ENCODE measurements at regions of chr17 and their contacts with region 1.

Region 1: DNA sequence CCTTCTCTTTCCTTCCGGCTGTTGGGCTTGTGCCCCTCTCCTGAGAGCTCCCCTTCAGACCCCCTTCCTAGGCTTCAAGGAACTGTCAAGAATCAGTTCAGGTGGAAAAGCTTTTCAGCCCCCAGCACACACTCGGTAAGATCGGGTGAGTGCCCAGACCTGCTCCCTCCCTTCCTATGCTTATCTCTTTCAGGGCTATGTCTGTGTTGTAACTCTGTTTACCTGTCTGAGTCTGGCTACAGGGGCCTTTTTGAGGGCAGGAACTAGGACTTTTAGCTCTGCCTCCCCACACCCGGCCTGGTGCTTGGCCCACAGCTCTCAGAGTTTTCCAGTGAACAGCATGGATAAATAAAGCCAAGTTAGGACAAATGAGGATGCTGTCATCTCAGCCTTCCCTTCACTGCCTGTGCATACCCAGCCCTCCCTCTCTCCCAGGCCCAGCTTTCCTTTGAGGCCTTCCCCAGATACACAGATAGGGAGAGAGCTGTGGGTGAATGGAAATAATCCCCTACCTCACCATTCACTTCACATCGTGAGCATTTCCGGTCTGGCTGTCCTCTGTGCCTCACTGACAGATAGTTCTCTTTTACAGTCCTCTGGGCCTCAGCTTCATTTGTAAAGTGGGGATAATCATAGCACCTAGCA is 5.7 kb upstream of the MRPS23 start:
- DNase-seq: no peak
- H3K4me3 ChIP-seq: no peak overlapping the region
- H3K27ac ChIP-seq: no peak overlapping the region
- H3K4me1 ChIP-seq: peaks cover 13 to 35% of the 10 kb centered on the region in 2 donors
- H3K27me3 ChIP-seq: no peaks in the 10 kb centered on the region
- CTCF ChIP-seq: no peak

Region 2: GRCh38 chr17:57987580-57988421 is 132.3 kb after region 1 on chr17 and contains the start of gene VEZF1:
- intact Hi-C with region 1: loop called (anchors 1 kb)
- DNase-seq: peak in 1 of 2 donors; percentile 85
- H3K4me3 ChIP-seq: peak within 1 kb of the TSS; percentile 84 to 85
- H3K27ac ChIP-seq: peak within 1 kb of the TSS; percentile 97 to 98
- H3K4me1 ChIP-seq: peaks cover 0 to 19% of the 10 kb centered on the region in 2 donors
- H3K27me3 ChIP-seq: no peaks in the 10 kb centered on the region
- CTCF ChIP-seq: no peak
- total RNA-seq, gene VEZF1: 47.4 TPM

Region 3: GRCh38 chr17:57995076-57995956 is 139.8 kb after region 1 on chr17:
- intact Hi-C with region 1: loop called (anchors 1 kb)
- DNase-seq: peak; percentile 23 to 84
- H3K4me3 ChIP-seq: no peak overlapping the region
- H3K27ac ChIP-seq: peak overlapping the region; percentile 32 to 73
- H3K4me1 ChIP-seq: no peaks in the 10 kb centered on the region
- H3K27me3 ChIP-seq: no peaks in the 10 kb centered on the region
- CTCF ChIP-seq: peak; percentile 57 to 84 (median 68)

Region 4: GRCh38 chr17:58112970-58113631 is 257.6 kb after region 1 on chr17:
- intact Hi-C with region 1: loop called (anchors 2 kb)
- DNase-seq: peak; percentile 17 to 87
- H3K4me3 ChIP-seq: no peak overlapping the region
- H3K27ac ChIP-seq: no peak overlapping the region
- H3K4me1 ChIP-seq: no peaks in the 10 kb centered on the region
- H3K27me3 ChIP-seq: no peaks in the 10 kb centered on the region
- CTCF ChIP-seq: peak; percentile 88 to 98 (median 90)

Measured in ascending aorta (tissue), 2 donors.